Heart right ventricle (tissue), 16 donors: ENCODE measurements at regions of chr1 and their contacts with region 1.

Region 1: DNA sequence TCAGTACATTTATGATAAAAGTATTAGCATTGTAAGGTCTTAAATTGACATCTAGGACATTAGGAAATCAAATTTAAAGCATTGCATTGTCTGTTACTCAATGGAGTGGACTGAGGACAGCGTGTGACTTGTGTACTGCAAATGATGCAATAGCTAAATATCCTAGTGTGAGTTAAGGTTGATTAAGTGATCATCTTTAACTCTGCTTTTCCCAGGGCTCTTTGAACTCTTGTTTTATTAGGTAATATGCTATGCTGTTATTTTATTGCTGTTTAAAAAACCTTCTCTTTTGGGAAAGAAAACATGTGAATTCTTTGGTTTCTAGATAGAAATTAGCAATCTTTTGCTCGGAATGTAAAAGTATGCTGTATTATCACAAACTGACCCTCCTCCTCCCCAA is 38.6 kb downstream of the NFIA start:
- DNase-seq: no peak
- ATAC-seq: peak in 7 of 8 donors; percentile 40 to 83 (median 63)
- H3K4me3 ChIP-seq: peak overlapping the region in 8 of 10 donors; percentile 2 to 39 (median 29)
- H3K27ac ChIP-seq: peak overlapping the region; percentile 36 to 85 (median 65)
- H3K4me1 ChIP-seq: peaks cover 10 to 97% (median 77%) of the 10 kb centered on the region in 9 donors
- H3K27me3 ChIP-seq: no peaks in the 10 kb centered on the region
- CTCF ChIP-seq: no peak

Region 2: GRCh38 chr1:61084491-61085031 is 36.4 kb before region 1 on chr1:
- intact Hi-C with region 1: loop called in 5 of 10 experiments (anchors 5 kb)
- DNase-seq: no peak
- ATAC-seq: no peak
- H3K4me3 ChIP-seq: peak overlapping the region; percentile 77 to 98 (median 86)
- H3K27ac ChIP-seq: peak overlapping the region; percentile 92 to 99 (median 98)
- H3K4me1 ChIP-seq: peaks cover under 1 to 73% (median 57%) of the 10 kb centered on the region in 9 donors
- H3K27me3 ChIP-seq: no peaks in the 10 kb centered on the region
- CTCF ChIP-seq: no peak

Region 3: DNA sequence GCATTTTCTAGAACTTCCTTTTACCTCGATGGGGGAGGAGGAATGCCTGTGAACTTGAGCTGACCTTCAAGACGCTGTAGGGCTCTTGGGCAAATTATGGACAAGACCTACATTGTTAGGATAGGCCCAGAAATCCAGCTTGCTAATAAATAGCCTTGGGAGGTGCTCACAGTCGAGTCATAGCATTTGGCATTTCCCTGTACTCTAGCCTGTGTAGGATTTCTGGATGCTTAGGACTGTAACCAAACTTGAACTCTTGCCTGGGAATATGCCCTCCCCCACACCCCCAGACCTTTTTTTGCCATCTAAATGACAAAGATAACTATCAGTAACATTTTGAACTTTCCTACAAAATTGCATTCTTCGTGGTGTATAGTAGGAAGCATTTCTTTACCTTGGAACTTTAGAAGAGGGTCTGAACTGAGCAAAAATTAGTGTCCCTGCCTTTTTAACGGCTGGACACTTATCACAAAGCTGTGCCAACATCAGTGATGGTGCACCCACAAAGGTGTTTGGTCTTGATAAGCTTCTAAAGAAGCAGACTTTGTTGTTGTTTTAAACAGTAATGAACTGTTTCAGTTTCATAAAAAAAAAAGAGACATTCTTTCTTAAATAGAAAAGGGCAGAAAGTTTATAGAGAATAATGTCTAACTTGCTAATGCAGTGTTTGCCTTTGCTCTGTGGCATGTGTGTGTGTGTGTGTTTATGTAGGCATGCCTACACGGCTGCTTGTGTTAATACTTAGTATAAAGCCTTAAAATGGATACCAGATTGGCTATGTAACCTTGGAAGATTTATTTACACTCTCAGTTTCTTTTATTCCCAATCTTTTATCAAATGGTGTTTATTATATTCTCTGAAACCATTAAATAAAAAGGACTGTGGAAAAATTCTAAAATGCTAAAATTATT is 49.6 kb after region 1 on chr1:
- intact Hi-C with region 1: loop called in 1 of 10 experiments (anchors 10 kb)
- DNase-seq: no peak
- ATAC-seq: peak in 6 of 8 donors; percentile 43 to 77 (median 56)
- H3K4me3 ChIP-seq: no peak overlapping the region
- H3K27ac ChIP-seq: peak overlapping the region in 8 of 10 donors; percentile 3 to 67 (median 32)
- H3K4me1 ChIP-seq: peaks cover 18 to 88% (median 69%) of the 10 kb centered on the region in 9 donors
- H3K27me3 ChIP-seq: no peaks in the 10 kb centered on the region
- CTCF ChIP-seq: no peak